Activated CD8-positive, alpha-beta T cell treated with anti-CD3 and anti-CD28 coated beads for 36 hours (primary cell): ENCODE measurements at regions of chr12 and their contacts with region 1.

Region 1: GRCh38 chr12:8590842-8591550 is 21.7 kb downstream of the AICDA start:
- DNase-seq: peak; percentile 53
- ATAC-seq: peak; percentile 98
- H3K4me3 Mint-ChIP-seq: no peak overlapping the region
- H3K27ac Mint-ChIP-seq: no peak overlapping the region
- H3K4me1 Mint-ChIP-seq: peaks cover 10% of the 10 kb centered on the region
- H3K27me3 Mint-ChIP-seq: no peaks in the 10 kb centered on the region
- CTCF ChIP-seq: no peak

Region 2: DNA sequence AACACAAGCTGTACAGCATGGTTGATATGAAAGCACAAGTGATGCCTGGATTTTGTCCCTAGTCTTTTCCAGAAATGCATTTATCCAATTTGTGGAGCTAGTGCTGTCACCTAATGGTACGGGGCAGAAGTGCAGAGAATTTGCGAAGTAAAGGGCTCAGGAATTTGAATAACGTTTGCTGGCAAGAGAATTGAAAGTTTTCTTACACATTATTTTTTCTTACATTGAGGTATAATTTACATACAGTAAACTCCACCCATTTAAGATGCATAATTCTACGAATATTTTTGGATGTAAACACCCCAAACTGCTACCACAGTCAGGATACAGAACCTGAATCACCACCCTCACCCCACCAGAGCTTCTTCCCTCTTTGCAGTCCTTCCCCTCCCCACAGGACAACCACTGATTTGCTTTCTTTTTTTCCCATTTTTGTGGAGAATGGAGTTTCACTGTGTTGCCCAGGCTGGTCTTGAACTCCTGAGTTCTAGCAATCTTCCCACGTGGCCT is 18.1 kb after region 1 on chr12:
- CTCF ChIA-PET with region 1: interaction called, 12 read pairs
- POLR2A ChIA-PET with region 1: no interaction called
- intact Hi-C with region 1: no loop called
- DNase-seq: peak; percentile 16
- ATAC-seq: peak; percentile 61
- H3K4me3 Mint-ChIP-seq: no peak overlapping the region
- H3K27ac Mint-ChIP-seq: no peak overlapping the region
- H3K4me1 Mint-ChIP-seq: peaks cover 10% of the 10 kb centered on the region
- H3K27me3 Mint-ChIP-seq: peaks cover 2% of the 10 kb centered on the region
- CTCF ChIP-seq: peak; percentile 75